Posterior vena cava (tissue), 2 donors: ENCODE measurements at regions of chr3 and their contacts with region 1.

Region 1: DNA sequence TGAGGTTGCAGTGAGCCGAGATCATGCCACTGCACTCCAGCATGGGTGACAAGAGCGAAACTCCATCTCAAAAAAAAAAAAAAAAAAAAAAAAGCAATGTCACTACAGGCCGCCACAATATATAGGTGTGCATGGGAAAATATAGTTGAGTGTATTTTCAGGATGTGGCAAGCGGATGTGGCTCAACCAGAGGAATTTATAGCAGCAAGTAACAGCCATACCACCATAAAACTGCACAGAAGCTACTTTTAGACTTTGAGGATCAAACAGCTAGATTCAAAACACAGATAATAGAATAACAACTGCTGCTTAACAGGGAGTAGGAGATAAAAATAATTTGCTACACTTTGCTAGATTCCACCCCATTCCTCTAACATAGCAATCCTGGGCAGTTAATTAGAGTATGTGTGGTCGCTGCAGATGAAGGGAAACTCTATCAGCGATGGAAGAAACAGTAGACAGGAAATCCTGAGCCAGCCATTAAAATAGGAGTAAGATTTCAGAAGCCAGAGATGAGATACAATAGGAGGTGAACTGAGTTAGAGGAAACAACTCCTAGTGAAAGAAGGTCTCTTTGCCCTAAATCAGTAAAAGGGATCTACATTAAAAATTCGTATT is 318.7 kb upstream of the STT3B start:
- DNase-seq: no peak

Region 2: DNA sequence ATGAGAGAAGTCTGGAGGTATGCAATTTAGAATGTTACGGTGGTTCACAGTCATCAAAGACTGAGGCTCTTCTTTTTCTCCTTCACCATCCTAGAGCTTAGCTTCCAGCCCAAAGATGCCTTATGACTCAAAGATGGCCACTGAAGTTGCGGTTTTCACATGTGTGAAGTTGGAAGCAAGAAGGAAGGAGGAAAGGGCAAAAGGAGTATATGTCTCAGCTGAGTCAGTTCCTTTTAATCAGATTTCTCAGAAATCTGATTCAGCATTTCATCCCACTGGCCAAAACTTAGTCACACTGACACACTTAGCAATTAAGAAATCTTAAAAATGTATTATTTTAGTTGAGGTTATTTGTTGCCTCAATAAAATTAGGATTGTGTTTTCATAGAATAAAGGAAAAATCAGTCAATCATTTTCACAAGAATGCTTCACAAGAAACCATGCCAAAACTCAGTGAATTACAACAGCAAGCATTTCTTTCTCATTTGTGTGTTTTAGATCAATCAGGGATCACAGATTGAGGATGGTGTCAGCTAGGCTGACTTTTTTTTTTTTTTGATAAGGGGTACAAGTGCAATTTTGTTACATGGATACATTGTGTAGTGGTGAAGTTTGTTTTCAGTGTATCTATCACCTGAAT is 108.4 kb before region 1 on chr3:
- intact Hi-C with region 1: no loop called
- DNase-seq: no peak

Region 3: GRCh38 chr3:31377045-31377642 is 163.2 kb after region 1 on chr3:
- intact Hi-C with region 1: loop called in 1 of 2 experiments (anchors 5 kb)
- DNase-seq: no peak

Region 4: DNA sequence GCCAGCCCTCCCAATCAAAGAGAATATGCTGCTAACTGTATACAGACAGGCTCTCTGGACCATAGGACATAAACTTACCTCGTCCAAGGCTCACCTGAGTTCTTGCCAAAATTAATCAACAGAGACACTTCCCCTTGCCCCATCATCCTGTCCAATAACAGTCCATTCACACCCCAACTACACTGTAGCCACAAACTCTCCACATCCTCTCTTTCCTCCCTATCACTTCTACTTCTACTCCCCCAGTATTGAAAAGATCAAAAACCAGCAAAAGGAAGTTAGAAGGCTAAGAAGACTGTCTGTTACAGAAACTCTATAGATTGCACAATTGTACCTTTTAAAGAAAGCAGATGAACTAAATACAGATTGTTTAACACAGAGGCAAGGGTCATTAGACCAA is 185.3 kb after region 1 on chr3:
- intact Hi-C with region 1: no loop called
- DNase-seq: no peak